Activated CD4-positive, alpha-beta memory T cell treated with anti-CD3 and anti-CD28 coated beads for 36 hours (primary cell): ENCODE measurements at regions of chr6 and their contacts with region 1.

Region 1: DNA sequence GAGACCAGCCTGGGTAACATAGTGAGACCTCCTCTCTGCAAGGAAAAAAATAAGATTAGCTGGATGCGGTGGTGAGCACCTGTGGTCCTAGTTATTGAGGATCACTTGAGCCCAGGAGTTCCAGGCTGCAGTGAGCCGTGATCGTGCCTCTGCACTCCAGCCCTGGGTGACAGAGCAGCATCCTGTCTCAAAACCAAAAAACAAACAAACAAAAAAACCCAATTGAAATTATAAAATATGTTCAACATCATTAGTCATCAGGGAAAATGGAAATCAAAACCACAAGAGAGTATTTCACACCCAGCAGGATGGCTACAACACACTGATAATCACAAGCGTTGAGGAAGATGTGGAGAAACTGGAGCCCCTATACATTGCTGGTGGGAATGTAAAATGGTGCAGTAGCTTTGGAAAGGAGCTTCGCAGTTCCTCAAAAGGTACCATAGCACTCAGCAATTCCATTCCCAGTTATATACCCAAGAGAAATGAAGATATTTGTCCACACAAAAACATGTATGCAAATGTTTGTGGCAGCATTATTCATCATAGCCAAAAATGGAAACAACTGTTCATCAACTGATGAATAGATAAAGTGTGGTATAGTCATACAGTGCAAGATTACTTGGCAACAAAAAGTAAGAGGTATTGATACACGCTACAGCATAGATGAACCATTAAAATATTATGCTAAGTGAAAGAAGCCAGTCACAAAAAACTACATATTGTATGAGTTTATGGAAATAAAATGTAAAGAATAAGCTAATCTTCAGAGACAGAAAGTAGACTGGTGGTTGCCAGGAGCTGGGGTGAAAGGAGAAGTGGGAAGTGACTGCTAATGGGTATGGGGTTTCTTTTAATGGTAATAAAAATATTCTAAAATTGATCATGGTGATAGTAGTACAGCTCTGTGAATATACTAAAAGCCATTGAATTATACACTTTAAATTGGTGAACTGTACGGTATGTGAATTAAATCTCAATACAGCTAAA is 38.7 kb upstream of the RIPOR2 start:
- DNase-seq: peak; percentile 69
- H3K4me3 Mint-ChIP-seq: peak overlapping the region; percentile 48
- H3K27ac Mint-ChIP-seq: peak overlapping the region; percentile 90
- H3K4me1 Mint-ChIP-seq: peaks cover 64% of the 10 kb centered on the region
- H3K27me3 Mint-ChIP-seq: no peaks in the 10 kb centered on the region

Region 2: GRCh38 chr6:24899997-24900325 is 74.5 kb before region 1 on chr6:
- CTCF ChIA-PET with region 1: no interaction called
- POLR2A ChIA-PET with region 1: interaction called, 10 read pairs
- intact Hi-C with region 1: no loop called
- DNase-seq: peak; percentile 70
- H3K4me3 Mint-ChIP-seq: peak overlapping the region; percentile 59
- H3K27ac Mint-ChIP-seq: peak overlapping the region; percentile 90
- H3K4me1 Mint-ChIP-seq: peaks cover 88% of the 10 kb centered on the region
- H3K27me3 Mint-ChIP-seq: no peaks in the 10 kb centered on the region

Region 3: GRCh38 chr6:24927985-24928745 is 46.3 kb before region 1 on chr6:
- CTCF ChIA-PET with region 1: interaction called, 31 read pairs
- POLR2A ChIA-PET with region 1: interaction called, 19 read pairs
- intact Hi-C with region 1: loop called (anchors 1 kb)
- DNase-seq: no peak
- H3K4me3 Mint-ChIP-seq: peak overlapping the region; percentile 80
- H3K27ac Mint-ChIP-seq: peak overlapping the region; percentile 97
- H3K4me1 Mint-ChIP-seq: peaks cover 81% of the 10 kb centered on the region
- H3K27me3 Mint-ChIP-seq: peaks cover 2% of the 10 kb centered on the region

Region 4: DNA sequence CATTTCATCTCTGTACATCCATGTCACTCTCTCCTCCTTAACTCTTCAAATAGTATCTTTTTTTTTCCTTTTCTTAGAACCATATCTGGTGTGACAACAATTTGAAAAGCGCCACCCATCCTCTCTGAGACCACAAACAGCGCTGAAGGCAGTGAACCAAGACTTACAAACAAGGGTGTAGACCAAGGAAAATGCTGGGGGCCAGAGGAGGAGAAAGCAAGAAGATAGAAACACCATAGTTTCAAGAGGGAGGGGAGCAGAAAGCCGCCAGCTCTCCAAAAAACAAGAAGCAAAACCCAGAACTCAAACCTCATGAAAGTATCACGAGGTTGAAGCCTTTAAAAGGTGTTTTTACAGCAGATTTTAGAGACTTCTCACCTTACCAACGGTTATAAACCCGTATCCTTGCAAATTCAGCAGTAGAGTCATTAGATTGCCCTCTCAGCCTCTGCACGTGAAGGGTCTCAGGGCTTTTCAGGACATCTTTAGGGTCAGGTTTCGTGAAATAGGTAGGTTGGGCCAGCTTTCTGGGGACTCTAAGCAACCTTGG is 25.4 kb before region 1 on chr6:
- CTCF ChIA-PET with region 1: interaction called, 3 read pairs
- POLR2A ChIA-PET with region 1: no interaction called
- intact Hi-C with region 1: loop called (anchors 1 kb)
- DNase-seq: peak; percentile 53
- H3K4me3 Mint-ChIP-seq: peak overlapping the region; percentile 22
- H3K27ac Mint-ChIP-seq: peak overlapping the region; percentile 73
- H3K4me1 Mint-ChIP-seq: peaks cover 61% of the 10 kb centered on the region
- H3K27me3 Mint-ChIP-seq: no peaks in the 10 kb centered on the region

Region 5: GRCh38 chr6:25006565-25007001 is 32.1 kb after region 1 on chr6:
- CTCF ChIA-PET with region 1: interaction called, 4 read pairs
- POLR2A ChIA-PET with region 1: interaction called, 5 read pairs
- intact Hi-C with region 1: loop called (anchors 1 kb)
- DNase-seq: peak; percentile 66
- H3K4me3 Mint-ChIP-seq: peak overlapping the region; percentile 10
- H3K27ac Mint-ChIP-seq: peak overlapping the region; percentile 78
- H3K4me1 Mint-ChIP-seq: peaks cover 77% of the 10 kb centered on the region
- H3K27me3 Mint-ChIP-seq: no peaks in the 10 kb centered on the region

Region 6: GRCh38 chr6:25223490-25223991 is 249.1 kb after region 1 on chr6:
- CTCF ChIA-PET with region 1: no interaction called
- POLR2A ChIA-PET with region 1: no interaction called
- intact Hi-C with region 1: no loop called
- DNase-seq: peak; percentile 72
- H3K4me3 Mint-ChIP-seq: peak overlapping the region; percentile 58
- H3K27ac Mint-ChIP-seq: no peak overlapping the region
- H3K4me1 Mint-ChIP-seq: peaks cover 12% of the 10 kb centered on the region
- H3K27me3 Mint-ChIP-seq: peaks cover 2% of the 10 kb centered on the region